CD14-positive monocyte (primary cell): ENCODE measurements at regions of chr1 and their contacts with region 1.

Region 1: GRCh38 chr1:108057541-108057940 is 92.6 kb upstream of the VAV3 start:
- DNase-seq: peak; percentile 55 to 77 (median 76)
- H3K4me3 ChIP-seq: peak overlapping the region in 1 of 3 experiments; percentile 40
- H3K4me3 Mint-ChIP-seq: peak overlapping the region; percentile 51 to 76
- H3K27ac ChIP-seq: peak overlapping the region; percentile 39 to 69
- H3K27ac Mint-ChIP-seq: peak overlapping the region; percentile 86 to 97 (median 89)
- H3K4me1 ChIP-seq: peaks cover 64 to 71% of the 10 kb centered on the region in 2 donors
- H3K4me1 Mint-ChIP-seq: peaks cover 66% of the 10 kb centered on the region
- H3K27me3 ChIP-seq: no peaks in the 10 kb centered on the region
- H3K27me3 Mint-ChIP-seq: no peaks in the 10 kb centered on the region
- CTCF ChIP-seq: no peak

Region 2: GRCh38 chr1:107877092-107877491 is 180.4 kb before region 1 on chr1:
- intact Hi-C with region 1: loop called in 1 of 2 experiments (anchors 10 kb)
- DNase-seq: peak; percentile 72 to 90 (median 88)
- H3K4me3 ChIP-seq: peak overlapping the region in 1 of 3 experiments; percentile 49
- H3K4me3 Mint-ChIP-seq: peak overlapping the region; percentile 25 to 64
- H3K27ac ChIP-seq: peak overlapping the region in 1 of 2 donors; percentile 75
- H3K27ac Mint-ChIP-seq: peak overlapping the region; percentile 82 to 95 (median 89)
- H3K4me1 ChIP-seq: peaks cover 57 to 74% of the 10 kb centered on the region in 2 donors
- H3K4me1 Mint-ChIP-seq: peaks cover 65% of the 10 kb centered on the region
- H3K27me3 ChIP-seq: no peaks in the 10 kb centered on the region
- H3K27me3 Mint-ChIP-seq: no peaks in the 10 kb centered on the region
- CTCF ChIP-seq: no peak

Region 3: DNA sequence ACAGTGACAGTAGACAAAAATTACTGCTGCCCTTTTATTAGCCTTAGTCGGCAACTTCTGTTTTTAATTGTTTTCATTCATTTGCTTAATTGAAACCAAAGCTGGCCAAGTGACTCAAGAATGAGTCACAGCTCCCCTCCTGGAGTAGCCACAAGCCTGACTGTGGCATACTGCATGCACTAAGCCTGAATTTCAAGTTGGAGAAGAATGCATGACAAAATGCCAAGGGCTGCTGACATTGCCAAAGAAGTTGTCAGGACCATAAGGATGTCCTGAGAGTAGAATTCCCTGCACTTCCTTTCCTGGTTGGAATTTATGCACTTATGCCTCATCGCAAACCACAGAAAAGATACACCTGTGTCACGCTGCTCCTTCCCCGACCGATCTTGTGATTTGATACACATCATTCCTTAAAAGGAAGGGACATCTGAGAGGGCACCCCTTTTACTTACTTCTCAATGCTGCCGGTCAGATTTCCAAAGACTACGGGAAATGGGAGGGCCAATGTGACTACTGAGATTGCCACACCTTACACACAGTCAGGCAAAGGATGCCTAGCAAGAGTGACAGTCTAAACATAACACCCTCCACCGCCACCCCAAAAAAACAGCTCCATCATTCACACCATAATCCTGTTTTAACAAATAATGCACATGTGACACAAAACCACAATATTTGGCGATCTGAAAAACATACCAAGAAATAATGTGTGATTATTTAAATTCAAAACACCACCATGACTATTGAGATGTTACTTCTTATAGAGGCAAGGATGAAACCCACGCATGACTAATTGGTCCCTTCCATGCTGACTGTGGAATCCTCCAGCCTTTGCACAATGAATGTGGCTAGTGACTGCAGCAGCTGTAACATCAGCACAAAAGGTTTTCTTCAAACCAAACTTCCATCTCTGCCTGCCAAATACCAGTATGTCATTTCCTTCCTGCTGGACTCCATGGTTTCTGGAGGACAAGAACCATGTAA is 120.8 kb before region 1 on chr1:
- intact Hi-C with region 1: loop called in 1 of 2 experiments (anchors 5 kb)
- DNase-seq: peak; percentile 86 to 95 (median 94)
- H3K4me3 ChIP-seq: peak overlapping the region in 2 of 3 experiments; percentile 27 to 56
- H3K4me3 Mint-ChIP-seq: peak overlapping the region; percentile 53 to 80
- H3K27ac ChIP-seq: peak overlapping the region; percentile 78 to 95
- H3K27ac Mint-ChIP-seq: peak overlapping the region; percentile 95 to 99 (median 98)
- H3K4me1 ChIP-seq: peaks cover 69 to 75% of the 10 kb centered on the region in 2 donors
- H3K4me1 Mint-ChIP-seq: peaks cover 71% of the 10 kb centered on the region
- H3K27me3 ChIP-seq: no peaks in the 10 kb centered on the region
- H3K27me3 Mint-ChIP-seq: no peaks in the 10 kb centered on the region
- CTCF ChIP-seq: no peak

Region 4: DNA sequence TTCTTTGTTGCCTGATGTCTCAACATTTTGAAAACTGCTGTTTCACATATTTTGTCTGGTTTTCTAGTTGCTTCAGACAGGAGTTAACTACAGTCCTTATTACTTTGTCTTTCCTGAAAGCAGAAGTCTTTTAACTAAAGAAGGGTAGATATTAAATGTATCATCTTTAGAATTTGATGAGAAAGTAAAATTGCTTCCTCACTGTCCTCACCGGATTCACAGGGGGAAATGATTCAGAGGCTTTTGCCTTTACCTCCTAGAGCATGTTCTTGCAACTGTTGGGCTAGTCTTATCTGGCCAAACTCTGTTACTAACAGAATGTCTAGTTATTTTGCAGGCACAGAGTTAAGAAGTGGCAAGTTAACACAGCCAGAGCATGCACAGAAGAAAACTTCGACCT is 14.7 kb after region 1 on chr1:
- intact Hi-C with region 1: loop called in 1 of 2 experiments (anchors 2 kb)
- DNase-seq: peak; percentile 46 to 63 (median 49)
- H3K4me3 ChIP-seq: no peak overlapping the region
- H3K4me3 Mint-ChIP-seq: no peak overlapping the region
- H3K27ac ChIP-seq: peak overlapping the region; percentile 48 to 67
- H3K27ac Mint-ChIP-seq: peak overlapping the region; percentile 76 to 91 (median 83)
- H3K4me1 ChIP-seq: peaks cover 36 to 41% of the 10 kb centered on the region in 2 donors
- H3K4me1 Mint-ChIP-seq: peaks cover 45% of the 10 kb centered on the region
- H3K27me3 ChIP-seq: no peaks in the 10 kb centered on the region
- H3K27me3 Mint-ChIP-seq: no peaks in the 10 kb centered on the region
- CTCF ChIP-seq: no peak

Region 5: GRCh38 chr1:108107658-108108518 is 50.3 kb after region 1 on chr1:
- intact Hi-C with region 1: loop called in 1 of 2 experiments (anchors 10 kb)
- DNase-seq: peak; percentile 52 to 86 (median 55)
- H3K4me3 ChIP-seq: no peak overlapping the region
- H3K4me3 Mint-ChIP-seq: no peak overlapping the region
- H3K27ac ChIP-seq: no peak overlapping the region
- H3K27ac Mint-ChIP-seq: peak overlapping the region in 4 of 7 donors; percentile 13 to 50 (median 33)
- H3K4me1 ChIP-seq: peaks cover 4 to 6% of the 10 kb centered on the region in 2 donors
- H3K4me1 Mint-ChIP-seq: peaks cover 7% of the 10 kb centered on the region
- H3K27me3 ChIP-seq: no peaks in the 10 kb centered on the region
- H3K27me3 Mint-ChIP-seq: peaks cover 0 to 2% (median 0%) of the 10 kb centered on the region in 3 donors
- CTCF ChIP-seq: no peak

Region 6: GRCh38 chr1:108125312-108126138 is 68.0 kb after region 1 on chr1:
- intact Hi-C with region 1: loop called in 1 of 2 experiments (anchors 10 kb)
- DNase-seq: peak; percentile 63 to 75 (median 65)
- H3K4me3 ChIP-seq: no peak overlapping the region
- H3K4me3 Mint-ChIP-seq: no peak overlapping the region
- H3K27ac ChIP-seq: no peak overlapping the region
- H3K27ac Mint-ChIP-seq: peak overlapping the region in 2 of 7 donors; percentile 15 to 71
- H3K4me1 ChIP-seq: peaks cover 9 to 14% of the 10 kb centered on the region in 2 donors
- H3K4me1 Mint-ChIP-seq: peaks cover 22% of the 10 kb centered on the region
- H3K27me3 ChIP-seq: no peaks in the 10 kb centered on the region
- H3K27me3 Mint-ChIP-seq: peaks cover 0 to 2% (median 0%) of the 10 kb centered on the region in 3 donors
- CTCF ChIP-seq: peak; percentile 89